Caco-2 (cell line): ENCODE measurements at regions of chr6 and their contacts with region 1.

Region 1: GRCh38 chr6:139655790-139656687 is 281.6 kb upstream of the CITED2 start:
- DNase-seq: peak; percentile 81 to 90
- H3K4me3 ChIP-seq: no peak overlapping the region
- H3K4me3 Mint-ChIP-seq: peak overlapping the region; percentile 60
- H3K27ac Mint-ChIP-seq: peak overlapping the region; percentile 88
- H3K4me1 ChIP-seq: peaks cover 46% of the 10 kb centered on the region
- H3K4me1 Mint-ChIP-seq: peaks cover 33% of the 10 kb centered on the region
- H3K27me3 ChIP-seq: no peaks in the 10 kb centered on the region
- H3K27me3 Mint-ChIP-seq: no peaks in the 10 kb centered on the region
- CTCF ChIP-seq: no peak

Region 2: GRCh38 chr6:139588076-139588639 is 67.9 kb before region 1 on chr6:
- CTCF ChIA-PET with region 1: no interaction called
- POLR2A ChIA-PET with region 1: no interaction called
- intact Hi-C with region 1: loop called (anchors 1 kb)
- DNase-seq: peak; percentile 30 to 45
- H3K4me3 ChIP-seq: no peak overlapping the region
- H3K4me3 Mint-ChIP-seq: peak overlapping the region; percentile 22
- H3K27ac Mint-ChIP-seq: peak overlapping the region; percentile 91
- H3K4me1 ChIP-seq: peaks cover 71% of the 10 kb centered on the region
- H3K4me1 Mint-ChIP-seq: peaks cover 71% of the 10 kb centered on the region
- H3K27me3 ChIP-seq: no peaks in the 10 kb centered on the region
- H3K27me3 Mint-ChIP-seq: no peaks in the 10 kb centered on the region
- CTCF ChIP-seq: no peak

Region 3: DNA sequence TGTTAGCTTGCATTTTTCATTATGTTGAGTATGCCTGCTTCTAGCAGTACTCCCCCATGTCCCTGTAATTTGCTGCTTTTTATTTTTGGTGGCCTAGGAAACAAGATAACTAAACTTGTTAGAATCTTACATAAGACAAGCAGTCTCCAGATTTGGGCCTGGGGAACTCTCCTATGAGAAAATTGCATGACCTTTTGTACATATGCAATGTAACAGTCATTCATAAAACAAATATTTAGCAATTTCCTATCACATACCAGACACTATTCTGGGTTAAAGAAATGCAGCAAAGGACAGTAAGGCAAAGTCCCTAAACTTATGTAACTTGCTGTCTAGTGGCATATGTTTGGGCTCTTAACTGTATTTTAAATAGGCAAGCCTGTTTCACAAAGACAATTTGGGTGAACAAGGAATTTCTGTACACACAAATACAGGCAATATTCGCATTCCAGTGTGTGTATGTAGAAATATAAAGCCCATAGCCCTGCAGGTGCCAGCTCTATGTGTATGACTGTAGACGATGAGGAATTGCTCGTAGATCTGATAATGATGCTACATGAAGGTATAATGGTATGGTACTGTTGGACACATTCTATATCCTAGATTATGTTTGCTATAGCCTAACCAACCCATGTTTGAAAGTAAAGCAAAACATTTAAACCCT is 23.6 kb after region 1 on chr6:
- CTCF ChIA-PET with region 1: no interaction called
- POLR2A ChIA-PET with region 1: no interaction called
- intact Hi-C with region 1: loop called (anchors 1 kb)
- DNase-seq: peak in 1 of 2 experiments; percentile 27
- H3K4me3 ChIP-seq: no peak overlapping the region
- H3K4me3 Mint-ChIP-seq: no peak overlapping the region
- H3K27ac Mint-ChIP-seq: peak overlapping the region; percentile 64
- H3K4me1 ChIP-seq: peaks cover 23% of the 10 kb centered on the region
- H3K4me1 Mint-ChIP-seq: peaks cover 6% of the 10 kb centered on the region
- H3K27me3 ChIP-seq: no peaks in the 10 kb centered on the region
- H3K27me3 Mint-ChIP-seq: no peaks in the 10 kb centered on the region
- CTCF ChIP-seq: no peak

Region 4: DNA sequence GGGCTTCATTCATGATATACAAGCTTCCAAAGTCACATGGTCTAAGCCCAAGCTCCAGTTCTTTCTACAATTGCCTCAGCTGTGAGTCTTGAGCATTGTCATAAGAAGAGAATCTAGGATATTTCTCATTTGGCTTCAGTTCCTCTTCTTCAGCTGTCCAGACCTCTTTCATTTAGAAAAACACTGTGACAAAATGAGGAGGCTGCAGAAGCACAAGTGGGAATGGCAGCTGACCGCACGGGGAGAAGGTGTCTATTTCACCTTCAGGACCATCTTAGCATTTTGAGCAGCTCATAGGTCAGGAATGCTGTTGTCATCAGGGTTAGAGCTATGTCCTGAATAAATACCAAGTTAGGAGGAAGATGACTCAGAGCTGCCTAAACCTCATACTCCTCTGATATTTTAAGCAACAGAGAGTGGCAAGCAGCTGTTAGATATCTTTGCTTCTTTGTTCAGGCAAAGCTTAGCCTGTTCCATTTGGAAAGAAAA is 108.5 kb after region 1 on chr6:
- CTCF ChIA-PET with region 1: no interaction called
- POLR2A ChIA-PET with region 1: no interaction called
- intact Hi-C with region 1: loop called (anchors 5 kb)
- DNase-seq: peak; percentile 42 to 45
- H3K4me3 ChIP-seq: no peak overlapping the region
- H3K4me3 Mint-ChIP-seq: peak overlapping the region; percentile 34
- H3K27ac Mint-ChIP-seq: peak overlapping the region; percentile 78
- H3K4me1 ChIP-seq: peaks cover 54% of the 10 kb centered on the region
- H3K4me1 Mint-ChIP-seq: peaks cover 48% of the 10 kb centered on the region
- H3K27me3 ChIP-seq: no peaks in the 10 kb centered on the region
- H3K27me3 Mint-ChIP-seq: no peaks in the 10 kb centered on the region
- CTCF ChIP-seq: no peak